H1 (cell line): ENCODE measurements at regions of chr20 and their contacts with region 1.

Region 1: DNA sequence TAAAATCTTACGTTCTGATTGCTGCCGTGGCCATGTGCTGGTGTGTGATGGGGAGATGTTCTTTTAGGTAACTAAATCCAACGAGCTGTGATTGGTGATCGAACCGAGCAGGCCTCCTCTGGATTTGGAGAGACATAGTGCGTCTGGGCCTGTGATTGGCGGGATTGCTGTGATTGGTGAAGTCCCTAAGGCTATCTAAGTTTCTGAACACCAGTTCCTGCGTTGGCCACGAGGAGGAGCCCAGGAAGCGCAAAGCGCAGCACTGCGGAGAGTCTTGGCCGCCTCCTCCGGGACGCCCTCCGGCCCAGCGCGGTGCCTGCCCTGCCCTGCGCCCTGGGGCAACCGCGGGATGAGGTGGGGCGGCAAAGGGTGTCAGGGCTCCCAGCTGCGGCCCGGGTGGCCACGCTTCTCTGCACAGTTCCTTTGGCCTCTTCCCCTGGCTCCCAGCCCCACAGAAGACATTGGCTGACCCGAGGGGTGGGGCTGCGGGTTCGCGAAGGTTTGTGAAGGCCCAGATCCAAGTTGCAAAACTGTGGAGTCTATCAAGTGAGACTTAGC is 33.0 kb downstream of the HNF4A start:
- DNase-seq: peak; percentile 83 to 95
- H3K4me3 ChIP-seq: peak overlapping the region in 3 of 4 experiments; percentile 5 to 50 (median 32); a peak in 4 of 8 replicates
- H3K27ac ChIP-seq: no peak overlapping the region
- H3K4me1 ChIP-seq: peaks cover 0 to 5% (median 4%) of the 10 kb centered on the region in 4 experiments; a peak in 4 of 7 replicates
- H3K27me3 ChIP-seq: peaks cover 0 to 4% (median 0%) of the 10 kb centered on the region in 4 experiments; a peak in 3 of 7 replicates
- CTCF ChIP-seq: peak; percentile 90 to 93 (median 92)
- EP300 ChIP-seq: no peak
- POLR2A ChIP-seq: no peak
- RAD21 ChIP-seq: peak; percentile 89 to 90

Region 2: DNA sequence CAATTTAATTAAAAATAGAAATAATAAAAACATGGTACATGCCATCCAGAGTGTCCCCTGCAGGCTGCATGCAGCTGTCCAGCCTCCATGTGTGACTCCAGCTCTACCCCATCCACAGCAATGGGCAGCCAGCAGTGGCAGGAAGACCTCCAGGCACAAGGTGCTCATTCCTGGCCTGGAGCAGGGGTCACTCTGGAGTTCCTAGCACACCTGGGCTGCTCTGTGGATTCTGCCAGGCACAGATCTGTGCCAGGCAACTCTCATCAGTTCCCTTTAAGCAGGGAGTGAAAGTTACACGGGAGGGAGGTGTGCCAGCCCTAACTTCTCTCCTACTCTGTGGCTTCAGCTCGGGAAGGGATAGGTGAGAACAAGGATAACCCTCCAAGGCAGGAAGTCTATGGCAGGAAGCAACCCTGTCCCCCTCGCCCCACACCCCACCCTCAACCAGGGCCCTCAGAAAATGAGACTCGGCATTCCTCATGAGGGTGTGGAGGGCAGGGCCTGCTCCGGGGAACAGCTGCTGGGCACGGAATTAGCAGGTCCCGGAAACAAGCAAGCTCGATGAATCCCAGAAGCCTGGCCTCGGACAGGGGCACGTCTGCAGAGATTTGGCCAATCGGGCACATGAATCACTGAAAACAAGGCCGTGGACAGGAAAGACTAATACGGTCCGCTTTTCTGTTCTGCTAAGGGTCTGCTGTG is 211.6 kb before region 1 on chr20:
- CTCF ChIA-PET with region 1: no interaction called
- POLR2A ChIA-PET with region 1: no interaction called
- DNase-seq: no peak
- H3K4me3 ChIP-seq: no peak overlapping the region
- H3K27ac ChIP-seq: no peak overlapping the region
- H3K4me1 ChIP-seq: peaks cover 0 to 6% (median 1%) of the 10 kb centered on the region in 4 experiments; a peak in 3 of 7 replicates
- H3K27me3 ChIP-seq: no peaks in the 10 kb centered on the region
- CTCF ChIP-seq: no peak
- EP300 ChIP-seq: no peak
- POLR2A ChIP-seq: no peak
- RAD21 ChIP-seq: no peak

Region 3: GRCh38 chr20:44247586-44248409 is 140.7 kb before region 1 on chr20:
- CTCF ChIA-PET with region 1: interaction called, 17 read pairs
- POLR2A ChIA-PET with region 1: no interaction called
- DNase-seq: peak; percentile 63 to 96
- H3K4me3 ChIP-seq: peak overlapping the region; percentile 77 to 93 (median 84)
- H3K27ac ChIP-seq: no peak overlapping the region
- H3K4me1 ChIP-seq: peaks cover 0 to 5% (median 0%) of the 10 kb centered on the region in 4 experiments; a peak in 4 of 7 replicates
- H3K27me3 ChIP-seq: no peaks in the 10 kb centered on the region
- CTCF ChIP-seq: peak; percentile 85 to 99 (median 97)
- EP300 ChIP-seq: peak in 1 of 2 experiments; percentile 18; a peak in 1 of 3 replicates
- POLR2A ChIP-seq: no peak
- RAD21 ChIP-seq: peak; percentile 49 to 61

Region 4: DNA sequence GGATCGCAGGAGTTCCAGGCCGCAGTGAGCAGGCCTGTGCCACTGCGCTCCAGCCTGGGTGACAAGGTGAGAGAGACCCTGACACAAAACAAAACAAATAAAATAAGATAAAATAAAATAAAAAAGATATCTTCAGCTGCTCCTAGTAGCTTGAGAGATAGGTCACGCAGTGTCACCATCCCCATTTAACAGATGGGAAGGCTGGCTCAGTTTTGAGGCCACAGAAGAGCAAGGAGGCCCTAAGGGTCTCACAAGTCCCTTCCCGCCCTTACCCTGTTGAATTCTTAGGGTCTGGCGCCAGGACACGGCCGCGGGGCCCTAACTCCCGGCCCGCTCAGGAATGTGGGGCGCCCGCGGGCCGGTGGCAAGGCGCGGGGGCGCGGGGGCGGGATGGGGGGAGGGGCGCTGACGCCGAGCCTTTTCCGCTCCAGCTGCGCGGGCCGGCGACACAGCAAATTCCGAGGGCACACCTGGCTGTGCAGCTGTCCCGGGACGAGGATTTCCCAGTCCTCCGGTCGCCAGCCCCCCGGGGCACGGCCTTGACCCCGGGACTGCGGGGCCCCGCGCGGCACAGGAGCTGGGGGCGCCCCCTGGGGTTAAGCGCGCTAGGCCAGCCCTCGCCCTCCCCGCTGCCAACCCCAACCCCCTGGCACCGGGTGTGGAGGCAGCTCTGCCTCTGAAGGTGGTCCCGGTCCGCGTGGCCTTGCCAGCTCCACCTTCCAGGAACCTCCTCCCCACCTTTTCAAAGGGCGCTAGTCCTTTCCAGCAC is 62.0 kb before region 1 on chr20:
- CTCF ChIA-PET with region 1: interaction called, 10 read pairs
- POLR2A ChIA-PET with region 1: no interaction called
- DNase-seq: peak in 1 of 2 experiments; percentile 68
- H3K4me3 ChIP-seq: peak overlapping the region in 3 of 4 experiments; percentile 7 to 53 (median 29); a peak in 5 of 8 replicates
- H3K27ac ChIP-seq: no peak overlapping the region
- H3K4me1 ChIP-seq: peaks cover 0 to 10% (median 4%) of the 10 kb centered on the region in 4 experiments; a peak in 6 of 7 replicates
- H3K27me3 ChIP-seq: no peaks in the 10 kb centered on the region; a peak in 1 of 7 replicates
- CTCF ChIP-seq: no peak
- EP300 ChIP-seq: peak; percentile 5 to 48; a peak in 2 of 3 replicates
- POLR2A ChIP-seq: 0 out of 3 replicates have a peak, but pooled peaks of 1 of the 2 experiments have one; percentile 32
- RAD21 ChIP-seq: no peak

Region 5: GRCh38 chr20:44407402-44408184 is 19.0 kb after region 1 on chr20:
- CTCF ChIA-PET with region 1: interaction called, 14 read pairs
- POLR2A ChIA-PET with region 1: interaction called, 4 read pairs
- DNase-seq: no peak
- H3K4me3 ChIP-seq: no peak overlapping the region
- H3K27ac ChIP-seq: no peak overlapping the region
- H3K4me1 ChIP-seq: no peaks in the 10 kb centered on the region; a peak in 2 of 7 replicates
- H3K27me3 ChIP-seq: no peaks in the 10 kb centered on the region
- CTCF ChIP-seq: no peak
- EP300 ChIP-seq: no peak
- POLR2A ChIP-seq: no peak
- RAD21 ChIP-seq: no peak

Region 6: DNA sequence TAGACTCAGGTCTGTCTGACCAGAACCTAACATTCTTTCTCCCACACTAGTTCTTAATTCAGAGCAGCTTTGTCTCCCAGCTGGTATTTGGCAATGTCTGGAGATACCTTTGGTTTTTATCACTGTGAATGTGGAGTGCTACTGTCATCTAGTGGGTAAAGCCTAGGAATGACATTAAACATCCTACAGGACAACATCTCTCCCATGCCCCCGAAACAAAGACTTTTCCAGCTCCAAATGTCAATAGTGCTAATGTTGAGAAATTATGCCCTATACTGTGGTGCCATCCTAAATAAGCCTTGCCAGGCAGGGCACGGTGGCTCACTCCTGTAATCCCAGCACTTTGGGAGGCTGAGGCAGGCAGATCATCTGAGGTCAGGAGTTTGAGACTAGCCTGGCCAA is 82.9 kb after region 1 on chr20:
- CTCF ChIA-PET with region 1: interaction called, 26 read pairs
- POLR2A ChIA-PET with region 1: no interaction called
- DNase-seq: no peak
- H3K4me3 ChIP-seq: no peak overlapping the region
- H3K27ac ChIP-seq: no peak overlapping the region
- H3K4me1 ChIP-seq: peaks cover 2 to 7% (median 2%) of the 10 kb centered on the region in 4 experiments; a peak in 5 of 7 replicates
- H3K27me3 ChIP-seq: no peaks in the 10 kb centered on the region; a peak in 1 of 7 replicates
- CTCF ChIP-seq: peak in 2 of 3 experiments; percentile 32 to 46; a peak in 2 of 4 replicates
- EP300 ChIP-seq: no peak
- POLR2A ChIP-seq: no peak
- RAD21 ChIP-seq: peak; percentile 67 to 68